Right ventricle myocardium inferior (tissue), 1 donor: ENCODE measurements at regions of chr6 and their contacts with region 1.

Region 1: GRCh38 chr6:27503436-27504030 is 30.6 kb upstream of the ZNF184 start:
- DNase-seq: no peak
- ATAC-seq: peak; percentile 82

Region 2: DNA sequence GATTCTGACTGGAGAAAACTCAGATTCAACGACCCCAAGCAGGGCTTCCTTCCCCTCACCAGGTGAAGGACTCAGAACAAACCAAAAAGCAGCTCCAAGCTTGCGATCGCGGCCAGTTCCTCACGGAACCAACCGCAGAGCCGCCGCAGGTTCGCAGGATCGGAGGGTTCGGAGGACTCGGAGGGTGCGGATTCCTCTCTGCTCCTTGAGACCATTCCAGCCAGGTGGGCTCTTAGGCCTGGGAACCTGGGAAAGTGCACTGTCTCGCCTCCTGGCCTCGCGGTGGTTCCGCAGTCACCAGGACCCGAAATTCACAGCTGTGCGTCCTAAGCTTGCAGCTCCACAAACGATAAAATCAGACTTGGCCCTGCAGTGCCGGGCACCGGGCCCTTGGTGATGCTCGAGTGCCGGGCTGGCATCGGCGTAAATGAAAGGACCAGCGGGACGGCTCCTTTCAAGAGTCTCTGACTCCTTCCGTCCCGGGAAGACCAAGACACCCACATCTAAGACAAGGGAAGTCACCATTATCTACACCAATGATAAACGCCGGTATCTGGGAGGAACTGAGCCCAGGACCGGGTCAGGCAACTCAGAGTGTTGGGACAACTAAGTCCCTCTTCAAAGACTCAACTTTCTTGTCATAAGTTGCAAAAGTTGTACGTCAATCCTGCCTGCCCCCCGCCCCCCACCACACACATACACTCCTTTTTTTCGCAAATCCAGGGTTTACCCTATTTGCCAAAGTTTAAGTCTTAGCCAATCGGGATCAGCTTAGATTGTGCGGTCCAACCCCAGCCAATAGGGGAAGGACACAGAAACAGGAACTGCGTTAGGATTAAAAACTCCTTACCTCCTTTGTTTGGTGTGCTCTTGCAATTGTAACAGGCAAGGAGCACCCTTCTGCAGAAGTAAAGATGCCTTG is 325.8 kb before region 1 on chr6:
- intact Hi-C with region 1: loop called (anchors 10 kb)
- DNase-seq: peak; percentile 87
- ATAC-seq: peak; percentile 81

Region 3: DNA sequence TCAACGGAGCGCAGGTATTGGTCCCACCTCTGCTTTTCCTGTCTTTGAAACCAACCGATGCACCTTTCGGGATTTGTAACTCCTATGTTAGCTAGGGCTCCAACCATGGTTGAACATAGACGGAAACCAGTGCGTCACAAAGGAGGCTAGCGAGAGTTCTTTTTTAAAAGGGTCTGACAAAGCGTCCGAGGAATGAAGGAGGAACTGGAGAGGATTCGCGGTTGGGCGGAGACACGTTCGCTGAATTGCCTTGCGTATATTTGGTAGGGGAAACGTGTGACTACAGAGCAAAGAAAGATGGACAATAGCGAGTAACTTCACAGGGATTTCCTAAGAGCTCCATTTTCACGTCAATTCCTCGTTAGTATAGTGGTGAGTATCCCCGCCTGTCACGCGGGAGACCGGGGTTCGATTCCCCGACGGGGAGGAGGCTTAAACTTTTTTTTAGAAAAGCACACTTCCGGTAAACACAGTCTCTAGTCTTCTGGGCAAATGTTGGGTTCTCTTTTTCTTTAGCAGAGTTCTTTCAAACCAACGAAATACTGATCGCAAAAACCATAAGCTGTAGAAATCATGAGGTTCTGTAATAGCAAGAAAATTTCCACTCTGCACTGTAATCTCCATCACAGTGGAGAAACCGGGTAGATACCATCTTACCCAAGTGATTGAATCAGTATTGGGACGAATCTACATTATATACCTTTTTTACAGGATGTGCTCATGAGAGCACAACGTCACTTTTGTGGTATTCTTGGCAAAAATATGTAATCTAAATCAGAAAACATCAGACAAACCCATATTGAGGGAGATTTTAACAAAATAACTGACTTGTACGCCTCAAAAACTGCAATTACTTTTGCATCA is 24.0 kb before region 1 on chr6:
- intact Hi-C with region 1: loop called (anchors 2 kb)
- DNase-seq: peak; percentile 73
- ATAC-seq: peak; percentile 93

Region 4: DNA sequence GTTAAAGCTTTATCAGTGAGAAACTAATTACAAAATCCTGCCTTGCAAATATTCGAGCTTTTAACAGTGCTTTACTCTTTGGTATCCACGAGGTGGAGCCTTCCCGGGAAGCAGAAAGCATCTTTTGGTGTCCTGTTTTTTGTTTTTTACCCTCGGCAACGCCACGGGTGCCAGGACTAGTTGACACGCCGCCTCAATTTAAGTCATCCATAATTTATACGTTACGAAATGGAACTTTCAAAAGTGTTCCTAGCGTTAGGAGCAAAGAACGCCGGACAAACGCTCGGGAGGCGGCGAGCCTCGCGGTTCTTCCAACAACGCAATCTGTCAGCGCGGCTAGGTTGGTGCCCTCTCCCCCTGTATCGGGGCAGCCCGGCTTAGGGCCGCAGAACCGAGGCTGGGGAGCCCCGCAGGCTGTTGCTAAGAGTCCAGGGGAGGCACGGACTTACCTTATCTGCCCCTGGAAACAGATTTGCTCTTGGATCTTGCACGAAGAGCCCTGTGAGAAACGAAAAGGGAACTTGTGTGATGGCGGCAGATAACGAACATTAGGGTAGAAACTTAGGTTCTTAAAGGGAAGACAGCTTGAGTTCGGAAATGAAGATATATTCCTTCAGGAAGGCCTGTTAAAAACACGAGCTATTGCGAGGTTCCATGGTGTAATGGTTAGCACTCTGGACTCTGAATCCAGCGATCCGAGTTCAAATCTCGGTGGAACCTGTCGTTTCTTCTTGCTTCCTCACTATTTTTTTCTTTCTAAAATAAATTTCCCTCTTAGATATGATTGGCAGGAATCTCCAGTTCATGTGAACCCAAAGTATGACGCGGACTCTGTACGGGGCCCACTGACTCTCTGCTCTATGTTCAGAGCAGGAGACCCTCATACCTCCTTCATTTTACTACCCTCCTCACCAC is 15.6 kb after region 1 on chr6:
- intact Hi-C with region 1: loop called (anchors 2 kb)
- DNase-seq: peak; percentile 79
- ATAC-seq: peak; percentile 88

Region 5: DNA sequence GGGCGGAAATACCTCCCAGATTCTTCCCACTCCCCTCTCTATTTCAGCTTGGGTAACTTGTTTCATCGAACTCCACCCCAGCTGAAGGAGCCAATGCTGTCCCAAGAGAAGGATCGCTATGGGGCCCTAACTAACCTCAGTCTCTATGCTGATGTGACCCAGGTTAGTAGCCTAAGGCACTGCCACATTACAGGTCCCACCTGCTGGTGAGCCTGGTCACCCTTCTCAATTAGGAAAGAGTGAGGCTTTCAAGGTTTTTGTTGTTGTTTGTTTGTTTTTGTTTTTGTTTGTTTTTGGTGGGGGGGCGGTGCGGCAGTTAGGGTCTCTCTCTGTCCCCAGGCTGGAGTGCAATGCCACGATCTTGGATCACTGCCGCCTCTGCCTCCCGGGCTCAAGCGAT is 240.3 kb after region 1 on chr6:
- intact Hi-C with region 1: no loop called
- DNase-seq: no peak
- ATAC-seq: no peak